B cell (primary cell): ENCODE measurements at regions of chr1 and their contacts with region 1.

Region 1: GRCh38 chr1:175124861-175125260 is 57.2 kb downstream of the TNN start:
- DNase-seq: no peak
- ATAC-seq: no peak
- H3K4me3 ChIP-seq: no peak overlapping the region
- H3K4me3 Mint-ChIP-seq: no peak overlapping the region
- H3K27ac ChIP-seq: no peak overlapping the region
- H3K27ac Mint-ChIP-seq: no peak overlapping the region
- H3K4me1 ChIP-seq: no peaks in the 10 kb centered on the region
- H3K4me1 Mint-ChIP-seq: no peaks in the 10 kb centered on the region
- H3K27me3 ChIP-seq: no peaks in the 10 kb centered on the region
- H3K27me3 Mint-ChIP-seq: peaks cover 6% of the 10 kb centered on the region
- CTCF ChIP-seq: no peak

Region 2: DNA sequence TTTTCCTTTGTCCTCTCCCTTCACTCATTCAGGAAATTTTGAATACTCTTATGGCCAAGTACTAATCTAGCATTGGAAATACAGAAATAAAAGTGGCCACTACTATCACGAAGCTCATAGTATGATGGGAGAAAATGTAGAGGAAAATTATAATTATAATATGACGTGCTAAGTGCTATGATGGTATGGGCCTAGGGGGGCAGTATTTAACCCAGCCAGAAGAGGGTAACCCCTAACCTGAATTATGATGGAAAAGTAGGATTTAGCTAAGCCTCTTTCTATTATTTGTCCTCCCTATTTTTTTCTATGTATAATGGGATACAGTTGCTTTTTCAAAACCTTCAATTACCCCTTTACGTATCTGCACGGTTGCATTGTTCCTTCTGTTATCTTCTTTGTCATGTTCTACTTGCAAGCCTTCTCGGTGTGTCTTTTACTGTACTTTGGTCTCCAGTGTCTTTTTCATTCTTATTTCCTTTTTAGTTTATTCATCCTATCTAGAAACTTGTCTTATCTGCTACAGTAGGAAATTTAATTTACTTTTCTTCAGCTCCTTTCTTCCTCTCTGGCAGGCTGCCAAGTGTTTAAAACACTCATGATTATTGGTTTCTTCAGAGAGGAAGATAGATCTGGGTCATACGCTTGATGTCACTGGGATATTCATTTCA is 765.9 kb before region 1 on chr1:
- CTCF ChIA-PET with region 1: no interaction called
- POLR2A ChIA-PET with region 1: no interaction called
- intact Hi-C with region 1: no loop called
- DNase-seq: no peak
- ATAC-seq: no peak
- H3K4me3 ChIP-seq: no peak overlapping the region
- H3K4me3 Mint-ChIP-seq: no peak overlapping the region
- H3K27ac ChIP-seq: no peak overlapping the region
- H3K27ac Mint-ChIP-seq: no peak overlapping the region
- H3K4me1 ChIP-seq: no peaks in the 10 kb centered on the region
- H3K4me1 Mint-ChIP-seq: peaks cover 24% of the 10 kb centered on the region
- H3K27me3 ChIP-seq: no peaks in the 10 kb centered on the region
- H3K27me3 Mint-ChIP-seq: no peaks in the 10 kb centered on the region
- CTCF ChIP-seq: no peak

Region 3: DNA sequence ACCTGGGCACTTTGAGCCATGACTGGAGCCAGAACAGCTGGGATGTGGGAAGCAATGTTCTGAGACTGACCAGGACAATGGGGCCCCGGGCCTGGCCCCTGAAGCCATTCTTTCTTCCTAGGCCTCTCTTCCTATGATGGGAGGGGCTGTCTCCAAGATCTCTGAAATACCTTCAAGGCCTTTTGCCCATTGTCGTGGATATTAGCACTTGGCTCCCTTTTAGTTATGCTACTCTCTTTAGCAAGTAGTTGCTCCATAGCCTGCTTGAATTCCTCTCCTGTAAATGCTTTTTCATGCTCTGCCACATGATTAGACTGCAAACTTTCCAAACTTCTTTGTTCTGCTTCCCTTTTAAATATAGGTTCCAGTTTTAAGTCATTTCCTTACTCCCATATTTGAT is 388.0 kb before region 1 on chr1:
- CTCF ChIA-PET with region 1: no interaction called
- POLR2A ChIA-PET with region 1: no interaction called
- intact Hi-C with region 1: no loop called
- DNase-seq: no peak
- ATAC-seq: no peak
- H3K4me3 ChIP-seq: no peak overlapping the region
- H3K4me3 Mint-ChIP-seq: no peak overlapping the region
- H3K27ac ChIP-seq: no peak overlapping the region
- H3K27ac Mint-ChIP-seq: no peak overlapping the region
- H3K4me1 ChIP-seq: peaks cover 0 to 10% of the 10 kb centered on the region in 2 donors
- H3K4me1 Mint-ChIP-seq: peaks cover 27% of the 10 kb centered on the region
- H3K27me3 ChIP-seq: no peaks in the 10 kb centered on the region
- H3K27me3 Mint-ChIP-seq: no peaks in the 10 kb centered on the region
- CTCF ChIP-seq: no peak

Region 4: DNA sequence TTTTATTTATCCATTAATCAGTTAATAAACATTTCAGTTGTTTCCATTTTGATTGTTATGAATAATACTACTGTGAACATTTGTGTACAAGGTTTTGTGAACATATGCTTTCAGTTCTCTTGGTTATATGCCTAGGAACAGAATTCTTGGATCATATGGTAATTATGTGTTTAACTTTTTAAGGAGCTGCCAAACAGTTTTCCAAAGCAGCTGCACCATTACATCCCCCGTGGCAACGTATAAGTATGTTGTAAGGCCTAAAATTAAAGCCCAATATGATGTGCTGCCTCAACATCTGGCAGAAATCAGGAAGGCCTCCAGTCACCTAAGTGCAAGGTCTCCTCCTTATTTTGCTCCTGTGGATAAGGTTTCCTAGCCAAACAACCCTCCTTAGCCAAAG is 360.7 kb before region 1 on chr1:
- CTCF ChIA-PET with region 1: interaction called, 11 read pairs
- POLR2A ChIA-PET with region 1: no interaction called
- intact Hi-C with region 1: no loop called
- DNase-seq: no peak
- ATAC-seq: no peak
- H3K4me3 ChIP-seq: no peak overlapping the region
- H3K4me3 Mint-ChIP-seq: no peak overlapping the region
- H3K27ac ChIP-seq: no peak overlapping the region
- H3K27ac Mint-ChIP-seq: no peak overlapping the region
- H3K4me1 ChIP-seq: no peaks in the 10 kb centered on the region
- H3K4me1 Mint-ChIP-seq: peaks cover 11% of the 10 kb centered on the region
- H3K27me3 ChIP-seq: no peaks in the 10 kb centered on the region
- H3K27me3 Mint-ChIP-seq: no peaks in the 10 kb centered on the region
- CTCF ChIP-seq: no peak

Region 5: DNA sequence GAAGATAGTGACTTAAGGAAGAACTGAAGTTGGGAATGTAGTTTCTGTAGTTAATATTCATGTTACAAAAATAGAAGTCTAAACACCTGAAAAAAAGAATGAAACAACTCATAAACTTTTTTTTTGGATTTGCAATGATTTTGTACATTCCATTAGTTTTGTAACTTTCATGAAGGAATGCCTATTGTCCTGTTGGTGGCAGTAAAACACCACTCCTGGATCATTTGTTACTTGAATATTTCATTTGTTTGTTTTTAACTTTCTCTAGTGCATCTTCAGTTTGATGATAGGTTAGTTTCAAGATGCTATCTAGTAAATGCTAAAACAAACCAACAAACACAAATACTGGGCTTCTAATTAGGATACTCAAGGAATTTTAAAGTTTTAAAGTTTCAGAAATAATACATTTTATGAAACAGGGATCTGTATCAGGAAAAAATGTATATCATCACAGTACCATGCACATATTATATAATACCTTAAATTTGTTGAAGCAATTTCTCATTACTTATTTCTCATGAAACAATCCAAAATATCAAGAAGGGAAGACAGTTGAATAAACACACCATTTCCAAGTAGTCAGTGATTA is 354.8 kb before region 1 on chr1:
- CTCF ChIA-PET with region 1: interaction called, 11 read pairs
- POLR2A ChIA-PET with region 1: no interaction called
- intact Hi-C with region 1: no loop called
- DNase-seq: peak; percentile 63
- ATAC-seq: peak; percentile 57
- H3K4me3 ChIP-seq: no peak overlapping the region
- H3K4me3 Mint-ChIP-seq: no peak overlapping the region
- H3K27ac ChIP-seq: no peak overlapping the region
- H3K27ac Mint-ChIP-seq: no peak overlapping the region
- H3K4me1 ChIP-seq: no peaks in the 10 kb centered on the region
- H3K4me1 Mint-ChIP-seq: peaks cover 8% of the 10 kb centered on the region
- H3K27me3 ChIP-seq: no peaks in the 10 kb centered on the region
- H3K27me3 Mint-ChIP-seq: no peaks in the 10 kb centered on the region
- CTCF ChIP-seq: peak; percentile 86

Region 6: DNA sequence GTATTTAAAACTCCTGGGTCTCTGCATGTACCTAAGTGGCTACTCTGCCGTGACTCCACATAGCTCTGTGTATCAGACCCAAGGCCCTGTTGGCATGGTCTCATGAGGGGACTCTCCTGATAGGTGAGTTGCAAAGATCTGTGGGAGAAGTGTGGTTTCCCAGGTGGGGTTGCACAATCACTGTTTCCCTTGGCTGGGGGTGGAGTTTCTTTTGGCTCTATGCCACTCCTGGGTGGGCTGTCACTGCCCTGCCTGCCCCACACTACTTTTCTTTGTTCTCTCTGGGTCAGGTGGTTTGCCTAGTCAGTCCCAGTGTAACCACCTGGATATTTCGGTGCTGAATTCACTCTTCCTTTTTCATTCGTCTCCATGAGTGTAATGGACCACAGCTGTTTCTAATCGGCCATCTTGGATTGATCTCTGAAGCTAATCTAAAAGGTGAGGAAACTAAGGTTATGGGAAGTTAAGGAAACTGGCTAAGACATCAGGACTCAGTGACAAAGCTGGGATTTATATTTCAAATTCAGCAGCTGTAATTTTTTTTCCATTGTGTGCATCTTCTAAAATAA is 222.2 kb before region 1 on chr1:
- CTCF ChIA-PET with region 1: no interaction called
- POLR2A ChIA-PET with region 1: no interaction called
- intact Hi-C with region 1: no loop called
- DNase-seq: no peak
- ATAC-seq: no peak
- H3K4me3 ChIP-seq: no peak overlapping the region
- H3K4me3 Mint-ChIP-seq: no peak overlapping the region
- H3K27ac ChIP-seq: no peak overlapping the region
- H3K27ac Mint-ChIP-seq: no peak overlapping the region
- H3K4me1 ChIP-seq: no peaks in the 10 kb centered on the region
- H3K4me1 Mint-ChIP-seq: no peaks in the 10 kb centered on the region
- H3K27me3 ChIP-seq: no peaks in the 10 kb centered on the region
- H3K27me3 Mint-ChIP-seq: no peaks in the 10 kb centered on the region
- CTCF ChIP-seq: no peak

Region 7: GRCh38 chr1:174916846-174917245 is 208.0 kb before region 1 on chr1:
- CTCF ChIA-PET with region 1: no interaction called
- POLR2A ChIA-PET with region 1: no interaction called
- intact Hi-C with region 1: no loop called
- DNase-seq: peak; percentile 29
- ATAC-seq: peak; percentile 21
- H3K4me3 ChIP-seq: no peak overlapping the region
- H3K4me3 Mint-ChIP-seq: no peak overlapping the region
- H3K27ac ChIP-seq: no peak overlapping the region
- H3K27ac Mint-ChIP-seq: peak overlapping the region; percentile 53
- H3K4me1 ChIP-seq: peaks cover 7 to 8% of the 10 kb centered on the region in 2 donors
- H3K4me1 Mint-ChIP-seq: peaks cover 15% of the 10 kb centered on the region
- H3K27me3 ChIP-seq: no peaks in the 10 kb centered on the region
- H3K27me3 Mint-ChIP-seq: no peaks in the 10 kb centered on the region
- CTCF ChIP-seq: no peak

Region 8: GRCh38 chr1:175035865-175036264 is 89.0 kb before region 1 on chr1:
- CTCF ChIA-PET with region 1: interaction called, 11 read pairs
- POLR2A ChIA-PET with region 1: no interaction called
- intact Hi-C with region 1: no loop called
- DNase-seq: no peak
- ATAC-seq: no peak
- H3K4me3 ChIP-seq: no peak overlapping the region
- H3K4me3 Mint-ChIP-seq: no peak overlapping the region
- H3K27ac ChIP-seq: no peak overlapping the region
- H3K27ac Mint-ChIP-seq: no peak overlapping the region
- H3K4me1 ChIP-seq: no peaks in the 10 kb centered on the region
- H3K4me1 Mint-ChIP-seq: no peaks in the 10 kb centered on the region
- H3K27me3 ChIP-seq: no peaks in the 10 kb centered on the region
- H3K27me3 Mint-ChIP-seq: peaks cover 22% of the 10 kb centered on the region
- CTCF ChIP-seq: no peak